K562 (cell line): ENCODE measurements at regions of chr11 and their contacts with region 1.

Region 1: DNA sequence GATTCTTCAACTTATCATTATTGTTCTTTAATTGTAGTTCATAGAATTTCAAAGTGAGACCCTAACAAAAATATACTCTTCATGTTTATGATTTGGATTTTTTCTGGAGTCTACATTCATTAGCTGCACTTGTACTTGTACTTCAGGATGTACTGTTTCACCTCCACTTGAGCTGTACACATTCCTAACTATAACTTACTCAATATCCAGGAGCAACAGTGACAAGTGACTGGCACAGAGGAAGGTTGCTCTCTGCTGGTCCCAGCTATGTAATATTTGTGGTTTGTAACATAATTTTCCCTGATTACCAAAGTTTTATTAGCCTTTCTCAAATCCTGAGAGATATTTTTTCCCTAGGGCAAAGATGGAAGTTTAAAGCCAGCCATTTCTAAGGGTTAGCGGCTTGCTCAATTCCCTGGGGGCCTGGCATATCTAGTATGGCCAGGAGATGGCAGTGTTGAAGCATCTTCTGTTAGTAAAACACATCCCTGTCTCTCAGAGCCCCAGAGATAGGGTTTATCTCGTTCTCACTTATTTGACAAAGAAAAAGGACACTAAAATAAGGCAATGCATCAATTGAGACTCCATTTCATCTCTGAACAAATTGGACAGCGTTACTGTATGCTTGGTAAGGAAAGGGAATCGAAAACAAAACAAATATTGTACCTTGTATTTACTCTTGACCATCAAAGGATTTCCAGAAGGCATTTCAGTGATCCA is 14.2 kb downstream of the OR52A5 start:
- DNase-seq: peak; percentile 67 to 91 (median 76)
- ATAC-seq: peak; percentile 97
- H3K4me3 ChIP-seq: no peak overlapping the region
- H3K27ac ChIP-seq: no peak overlapping the region
- H3K4me1 ChIP-seq: peaks cover 0 to 9% of the 10 kb centered on the region in 2 experiments; a peak in 2 of 5 replicates
- H3K27me3 ChIP-seq: no peaks in the 10 kb centered on the region
- CTCF ChIP-seq: peak; percentile 80 to 92 (median 88)
- EP300 ChIP-seq: no peak
- POLR2A ChIP-seq: no peak
- RAD21 ChIP-seq: peak; percentile 97

Region 2: DNA sequence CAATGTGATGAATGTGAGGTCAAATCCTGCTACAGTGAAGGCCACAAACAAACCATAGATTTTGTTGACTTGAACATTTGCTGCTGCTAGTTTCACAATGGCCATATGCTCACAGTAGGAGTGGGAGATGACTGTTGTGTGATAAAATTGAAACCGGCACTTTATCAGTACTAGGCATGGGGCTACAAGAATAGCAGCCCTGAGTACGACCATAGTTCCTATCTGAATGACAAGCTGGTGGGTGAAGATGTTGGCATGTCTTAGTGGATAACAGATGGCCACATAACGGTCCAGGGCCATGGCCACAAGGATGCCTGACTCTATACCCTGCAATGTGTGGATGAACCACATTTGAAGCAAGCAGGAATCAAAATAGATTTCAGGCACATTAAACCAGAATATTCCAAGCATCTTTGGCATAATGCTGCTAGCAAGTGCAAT is 27.8 kb after region 1 on chr11:
- CTCF ChIA-PET with region 1: no interaction called
- POLR2A ChIA-PET with region 1: interaction called, 3 read pairs
- in situ Hi-C with region 1: no loop called
- intact Hi-C with region 1: loop called (anchors 2 kb)
- DNase-seq: peak; percentile 37 to 86 (median 64)
- ATAC-seq: peak; percentile 85
- H3K4me3 ChIP-seq: no peak overlapping the region
- H3K27ac ChIP-seq: peak overlapping the region; percentile 53
- H3K4me1 ChIP-seq: peaks cover 21 to 41% of the 10 kb centered on the region in 2 experiments; a peak in 3 of 5 replicates
- H3K27me3 ChIP-seq: no peaks in the 10 kb centered on the region
- CTCF ChIP-seq: no peak
- EP300 ChIP-seq: peak; percentile 96
- POLR2A ChIP-seq: no peak
- RAD21 ChIP-seq: no peak

Region 3: DNA sequence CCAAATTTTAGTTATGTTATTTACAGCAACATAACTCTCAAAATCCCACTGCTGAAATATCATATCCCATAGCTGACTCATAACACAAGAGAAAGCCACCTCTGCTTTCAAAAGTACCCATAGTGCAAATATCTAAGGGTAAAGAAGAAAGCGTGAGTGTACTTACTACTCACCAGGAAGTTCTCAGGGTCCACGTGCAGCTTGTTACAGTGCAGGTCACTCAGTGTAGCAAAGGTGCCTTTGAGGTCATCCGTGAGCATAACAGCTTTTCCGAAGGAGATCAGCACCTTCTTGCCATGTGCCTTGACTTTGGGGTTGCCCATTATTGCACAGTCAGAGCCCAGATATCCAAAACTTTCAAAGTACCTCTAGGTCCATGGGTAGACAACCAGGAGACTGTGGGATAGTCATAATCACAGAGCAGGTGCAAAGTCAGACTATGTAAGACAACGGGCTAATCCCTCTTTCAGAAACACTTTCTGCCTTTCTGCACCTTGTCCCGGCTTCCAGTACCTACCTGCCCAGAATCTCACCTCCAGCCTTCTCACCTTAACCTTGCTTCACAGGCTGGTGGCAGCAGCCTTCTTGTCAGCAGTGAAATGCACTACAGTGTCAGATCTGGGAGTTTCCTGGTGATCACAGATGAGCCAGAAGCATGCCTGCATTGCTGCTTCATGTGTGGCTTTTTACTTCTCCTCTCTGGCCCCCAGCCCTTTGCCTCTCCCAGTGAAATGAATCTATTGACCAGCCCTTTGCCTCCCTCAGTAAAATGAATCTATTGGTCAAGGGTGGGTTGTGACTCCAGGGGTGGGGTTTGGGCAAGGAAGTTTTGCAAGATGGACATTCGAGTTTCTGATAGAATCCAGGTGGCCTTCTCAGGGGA is 119.2 kb after region 1 on chr11:
- CTCF ChIA-PET with region 1: no interaction called
- POLR2A ChIA-PET with region 1: interaction called, 4 read pairs
- in situ Hi-C with region 1: no loop called
- intact Hi-C with region 1: loop called (anchors 2 kb)
- DNase-seq: peak in 2 of 4 experiments; percentile 59 to 88
- ATAC-seq: peak; percentile 61
- H3K4me3 ChIP-seq: peak overlapping the region; percentile 26
- H3K27ac ChIP-seq: peak overlapping the region; percentile 80
- H3K4me1 ChIP-seq: peaks cover 8 to 36% of the 10 kb centered on the region in 2 experiments
- H3K27me3 ChIP-seq: no peaks in the 10 kb centered on the region
- CTCF ChIP-seq: no peak
- EP300 ChIP-seq: peak; percentile 26; the same call in 1 of the 2 replicates
- POLR2A ChIP-seq: peak; percentile 93
- RAD21 ChIP-seq: no peak

Region 4: GRCh38 chr11:5369793-5370192 is 245.8 kb after region 1 on chr11:
- CTCF ChIA-PET with region 1: interaction called, 9 read pairs
- POLR2A ChIA-PET with region 1: no interaction called
- in situ Hi-C with region 1: no loop called
- intact Hi-C with region 1: loop called (anchors 5 kb)
- DNase-seq: peak in 2 of 4 experiments; percentile 42 to 63
- ATAC-seq: peak; percentile 84
- H3K4me3 ChIP-seq: no peak overlapping the region
- H3K27ac ChIP-seq: no peak overlapping the region
- H3K4me1 ChIP-seq: peaks cover 0 to 15% of the 10 kb centered on the region in 2 experiments; a peak in 2 of 5 replicates
- H3K27me3 ChIP-seq: no peaks in the 10 kb centered on the region
- CTCF ChIP-seq: peak; percentile 46 to 68 (median 50); a peak in 4 of 6 replicates
- EP300 ChIP-seq: no peak
- POLR2A ChIP-seq: no peak
- RAD21 ChIP-seq: peak; percentile 72 to 82

Region 5: DNA sequence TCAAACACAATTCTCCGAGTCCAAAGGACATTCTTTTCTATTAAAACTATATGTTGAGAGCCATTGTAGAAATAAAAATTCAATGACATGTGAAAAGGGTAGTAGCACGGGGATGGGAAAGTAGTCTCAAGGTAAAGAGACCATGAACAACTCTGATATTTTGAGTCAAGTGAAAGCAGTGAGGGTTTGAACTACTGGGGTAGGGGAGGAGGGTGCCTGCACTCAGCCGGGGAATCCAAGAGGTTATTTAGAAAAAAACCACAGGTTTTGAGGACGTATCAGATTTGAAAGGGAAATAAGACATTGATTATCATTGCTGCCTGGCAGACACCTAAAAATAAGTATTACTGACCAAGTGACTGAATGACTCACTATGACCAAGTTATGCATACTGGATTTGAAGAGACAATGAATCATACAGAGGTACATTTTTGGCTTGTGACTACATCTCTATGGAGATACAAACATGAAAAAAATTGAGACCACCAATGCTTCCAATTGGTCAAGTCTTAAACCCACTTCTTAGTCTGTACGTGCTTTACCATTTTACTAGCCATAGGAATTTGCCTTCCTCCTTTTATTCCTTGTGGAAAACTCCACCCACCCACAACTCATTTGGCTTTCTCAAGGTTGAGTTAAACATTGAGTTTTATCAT is 426.6 kb after region 1 on chr11:
- CTCF ChIA-PET with region 1: interaction called, 3 read pairs
- POLR2A ChIA-PET with region 1: no interaction called
- in situ Hi-C with region 1: no loop called
- intact Hi-C with region 1: loop called (anchors 2 kb)
- DNase-seq: peak in 1 of 4 experiments; percentile 30
- ATAC-seq: peak; percentile 42; the same call in 1 of the 3 replicates
- H3K4me3 ChIP-seq: no peak overlapping the region
- H3K27ac ChIP-seq: no peak overlapping the region
- H3K4me1 ChIP-seq: peaks cover 0 to 6% of the 10 kb centered on the region in 2 experiments; a peak in 2 of 5 replicates
- H3K27me3 ChIP-seq: no peaks in the 10 kb centered on the region; a peak in 1 of 5 replicates
- CTCF ChIP-seq: no peak
- EP300 ChIP-seq: no peak
- POLR2A ChIP-seq: no peak
- RAD21 ChIP-seq: no peak